HAP-1 (cell line): ENCODE measurements at regions of chr3 and their contacts with region 1.

Region 1: GRCh38 chr3:8970971-8971589 is 7.8 kb upstream of the RAD18 start:
- DNase-seq: peak; percentile 44 to 75
- H3K4me3 ChIP-seq: no peak overlapping the region
- H3K4me1 ChIP-seq: no peaks in the 10 kb centered on the region
- H3K27me3 ChIP-seq: peaks cover 15% of the 10 kb centered on the region

Region 2: GRCh38 chr3:8266730-8267131 is 704.3 kb before region 1 on chr3:
- in situ Hi-C with region 1: no loop called
- DNase-seq: no peak
- H3K4me3 ChIP-seq: no peak overlapping the region
- H3K4me1 ChIP-seq: no peaks in the 10 kb centered on the region
- H3K27me3 ChIP-seq: no peaks in the 10 kb centered on the region

Region 3: DNA sequence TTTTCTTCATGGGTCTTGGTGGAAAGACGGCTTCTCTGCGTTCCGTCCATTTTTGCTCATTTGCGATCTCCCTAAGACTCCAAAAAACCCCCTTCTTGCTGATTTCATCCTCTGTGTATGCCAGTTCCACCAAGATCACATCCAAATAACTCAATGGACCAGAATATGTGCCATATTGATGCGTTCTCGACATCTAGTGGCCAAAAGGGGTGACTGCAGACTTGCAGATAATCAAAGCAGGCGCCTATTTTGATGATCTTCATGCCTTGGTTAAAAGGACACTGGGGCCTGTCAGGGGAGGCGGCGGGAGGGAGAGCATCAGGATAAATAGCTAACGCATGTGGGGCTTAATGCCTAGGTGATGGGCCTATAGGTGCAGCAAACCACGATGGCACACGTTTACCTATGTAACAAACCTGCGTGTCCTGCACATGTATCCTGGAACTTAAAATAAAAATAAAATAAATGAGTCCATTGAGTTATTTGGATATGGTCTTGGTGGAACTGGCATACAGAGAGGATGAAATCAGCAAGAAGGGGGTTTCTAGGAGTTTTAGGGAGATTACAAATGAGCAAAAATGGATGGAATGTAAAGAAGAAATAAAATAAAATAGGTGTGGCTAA is 96.4 kb after region 1 on chr3:
- in situ Hi-C with region 1: loop called (anchors 5 kb)
- DNase-seq: peak; percentile 38 to 57
- H3K4me3 ChIP-seq: no peak overlapping the region
- H3K4me1 ChIP-seq: no peaks in the 10 kb centered on the region
- H3K27me3 ChIP-seq: no peaks in the 10 kb centered on the region

Region 4: DNA sequence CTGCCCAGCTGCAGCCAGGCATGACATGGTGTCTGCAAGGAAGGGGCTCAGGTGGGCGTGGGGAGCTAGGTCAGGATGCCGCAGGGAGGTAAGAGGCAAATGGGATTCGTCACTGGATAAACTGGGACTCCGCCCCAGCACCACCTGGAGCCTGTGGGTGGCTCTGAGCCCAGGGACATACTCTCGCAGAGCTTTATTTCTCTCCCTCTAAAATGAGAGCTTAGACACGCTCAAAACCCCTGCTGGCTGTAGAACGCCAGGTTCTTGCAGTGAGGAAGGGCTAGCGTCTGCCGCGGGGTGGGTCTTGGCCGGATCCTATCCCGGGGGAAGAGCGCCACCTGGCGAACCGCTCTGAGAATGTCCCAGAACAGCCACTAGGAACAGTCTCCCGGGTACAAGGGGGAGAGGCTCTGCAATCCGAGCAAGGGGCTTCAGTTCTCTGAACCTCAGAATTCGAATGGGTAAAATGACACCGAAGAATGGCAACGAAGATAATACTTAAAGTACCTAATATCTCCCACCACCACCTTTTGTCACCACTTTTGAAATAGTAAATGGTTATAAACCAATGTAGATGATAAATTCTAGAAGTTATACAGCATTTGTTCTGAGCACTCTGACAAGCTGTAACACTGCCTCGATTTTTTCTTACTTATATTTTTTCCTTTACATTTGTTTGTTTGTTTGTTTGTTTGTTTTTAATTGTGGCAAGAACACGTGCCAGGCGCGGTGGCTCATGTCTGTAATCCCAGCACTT is 331.5 kb after region 1 on chr3:
- in situ Hi-C with region 1: loop called (anchors 5 kb)
- DNase-seq: peak; percentile 72 to 89
- H3K4me3 ChIP-seq: no peak overlapping the region
- H3K4me1 ChIP-seq: no peaks in the 10 kb centered on the region; the same call in 1 of the 2 replicates
- H3K27me3 ChIP-seq: no peaks in the 10 kb centered on the region